SK-N-SH (cell line): ENCODE measurements at regions of chr7 and their contacts with region 1.

Region 1: GRCh38 chr7:104106108-104106905 is 101.5 kb downstream of the ORC5 start:
- DNase-seq: no peak
- H3K4me3 ChIP-seq: no peak overlapping the region
- H3K27ac ChIP-seq: no peak overlapping the region
- H3K4me1 ChIP-seq: no peaks in the 10 kb centered on the region
- H3K27me3 ChIP-seq: no peaks in the 10 kb centered on the region; the same call in 1 of the 2 replicates
- CTCF ChIP-seq: peak; percentile 49
- EP300 ChIP-seq: no peak
- RAD21 ChIP-seq: peak; percentile 78

Region 2: DNA sequence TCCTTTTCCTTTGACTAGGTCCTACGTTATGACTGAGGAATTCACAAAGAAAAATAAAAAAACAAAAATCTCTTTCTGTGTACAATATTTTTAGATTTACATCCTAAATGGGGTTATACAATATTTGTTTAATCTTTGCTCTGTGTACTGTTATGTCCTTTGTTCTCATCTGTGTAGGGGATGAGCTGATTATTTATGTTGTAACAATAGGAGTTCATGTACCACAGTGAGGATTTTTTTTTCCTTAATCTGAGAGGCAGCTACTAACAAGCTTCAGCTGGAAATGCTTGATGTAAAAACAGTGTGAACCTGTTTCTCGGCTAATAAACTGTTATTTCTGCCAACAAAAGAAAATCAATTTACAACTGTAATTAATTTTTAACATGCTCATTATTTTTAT is 43.5 kb after region 1 on chr7:
- CTCF ChIA-PET with region 1: interaction called, 12 read pairs
- POLR2A ChIA-PET with region 1: no interaction called
- DNase-seq: no peak
- H3K4me3 ChIP-seq: no peak overlapping the region
- H3K27ac ChIP-seq: no peak overlapping the region
- H3K4me1 ChIP-seq: no peaks in the 10 kb centered on the region; a peak in 1 of 4 replicates
- H3K27me3 ChIP-seq: no peaks in the 10 kb centered on the region
- CTCF ChIP-seq: no peak
- EP300 ChIP-seq: no peak
- RAD21 ChIP-seq: no peak